ENCODE measurements at regions of chr4 and their contacts with region 1.

Region 1: GRCh38 chr4:13654158-13654797 is 26.8 kb upstream of the BOD1L1 start:
- DNase-seq: peak; percentile 82
- H3K4me3 Mint-ChIP-seq: peak overlapping the region; percentile 68
- H3K27ac Mint-ChIP-seq: no peak overlapping the region
- H3K4me1 Mint-ChIP-seq: peaks cover 12% of the 10 kb centered on the region
- H3K27me3 Mint-ChIP-seq: no peaks in the 10 kb centered on the region
- CTCF ChIP-seq: peak; percentile 45

Region 2: GRCh38 chr4:13701937-13702446 is 47.7 kb after region 1 on chr4:
- CTCF ChIA-PET with region 1: no interaction called
- intact Hi-C with region 1: loop called (anchors 2 kb)
- DNase-seq: peak; percentile 47
- H3K4me3 Mint-ChIP-seq: peak overlapping the region; percentile 30
- H3K27ac Mint-ChIP-seq: peak overlapping the region; percentile 85
- H3K4me1 Mint-ChIP-seq: peaks cover 32% of the 10 kb centered on the region
- H3K27me3 Mint-ChIP-seq: no peaks in the 10 kb centered on the region
- CTCF ChIP-seq: no peak

Region 3: DNA sequence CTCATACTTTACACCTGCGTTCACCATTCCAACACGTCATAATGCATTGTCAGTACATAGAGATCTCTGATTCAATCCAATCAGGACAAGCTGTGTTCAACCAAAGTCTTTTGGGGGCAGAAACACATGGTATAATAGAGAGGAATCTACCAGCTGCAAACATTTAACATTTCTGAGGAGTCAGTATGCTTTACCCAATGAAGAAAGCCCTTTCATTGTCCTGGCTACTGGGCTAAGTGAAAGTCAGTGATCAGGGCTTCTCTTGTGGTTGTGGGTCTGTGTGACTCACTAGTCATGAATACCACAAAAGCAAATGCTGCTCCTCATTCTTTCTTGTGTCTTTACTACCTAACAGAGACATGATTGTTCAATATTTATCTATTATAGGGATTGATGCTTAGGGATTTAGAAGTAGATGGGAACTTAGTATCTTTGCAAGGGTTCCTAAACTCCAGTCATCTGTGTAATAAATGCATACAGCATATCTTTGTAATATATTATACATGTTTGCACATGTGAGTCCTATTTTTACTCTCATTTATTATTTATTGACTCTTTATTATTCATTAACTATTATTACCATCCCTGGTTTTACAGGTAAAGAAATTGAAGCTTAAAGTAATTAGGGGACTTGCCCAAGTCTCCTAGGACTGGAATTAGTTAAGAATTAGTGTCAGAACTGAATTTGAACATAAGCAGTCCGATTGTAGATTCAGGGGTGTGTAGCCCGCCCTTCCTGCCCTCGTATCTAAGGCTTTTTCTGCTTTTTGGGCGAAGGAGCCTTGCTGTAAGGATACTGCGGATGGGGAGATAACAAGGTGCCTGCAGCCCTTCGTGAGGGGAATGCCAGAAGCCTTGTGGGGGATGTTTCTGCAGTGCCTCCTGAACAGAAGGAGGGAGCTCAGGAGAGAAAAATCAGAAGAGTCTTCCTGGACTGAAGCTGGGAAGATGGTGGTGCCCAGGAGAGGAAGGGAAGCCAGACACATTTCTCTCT is 326.3 kb after region 1 on chr4:
- CTCF ChIA-PET with region 1: no interaction called
- intact Hi-C with region 1: loop called (anchors 1 kb)
- DNase-seq: no peak
- H3K4me3 Mint-ChIP-seq: no peak overlapping the region
- H3K27ac Mint-ChIP-seq: peak overlapping the region; percentile 41
- H3K4me1 Mint-ChIP-seq: peaks cover 47% of the 10 kb centered on the region
- H3K27me3 Mint-ChIP-seq: no peaks in the 10 kb centered on the region
- CTCF ChIP-seq: no peak

Region 4: DNA sequence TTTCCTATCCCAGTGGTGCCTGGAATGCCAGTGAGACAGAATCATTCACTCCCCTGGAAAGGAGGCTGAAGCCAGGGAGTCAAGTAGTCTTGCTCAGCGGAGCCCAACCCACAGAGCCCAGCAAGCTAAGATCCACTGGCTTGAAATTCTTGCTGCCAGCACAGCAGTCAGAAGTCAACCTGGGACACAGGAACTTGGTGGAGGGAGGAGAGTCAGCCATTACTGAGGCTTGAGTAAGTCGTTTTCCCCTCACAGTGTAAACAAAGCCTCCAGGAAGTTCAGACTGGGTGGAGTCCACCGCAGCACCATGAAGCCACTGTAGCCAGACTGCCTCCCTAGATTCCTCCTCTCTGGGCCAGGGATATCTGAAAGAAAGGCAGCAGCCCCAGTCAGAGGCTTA is 1064.8 kb after region 1 on chr4:
- CTCF ChIA-PET with region 1: no interaction called
- intact Hi-C with region 1: loop called (anchors 10 kb)
- DNase-seq: peak; percentile 50
- H3K4me3 Mint-ChIP-seq: no peak overlapping the region
- H3K27ac Mint-ChIP-seq: no peak overlapping the region
- H3K4me1 Mint-ChIP-seq: peaks cover 12% of the 10 kb centered on the region
- H3K27me3 Mint-ChIP-seq: no peaks in the 10 kb centered on the region
- CTCF ChIP-seq: no peak

Region 5: GRCh38 chr4:15001869-15002658 is 1347.8 kb after region 1 on chr4 and contains the start of gene CPEB2:
- CTCF ChIA-PET with region 1: interaction called, 5 read pairs
- intact Hi-C with region 1: loop called (anchors 10 kb)
- DNase-seq: peak; percentile 91
- H3K4me3 Mint-ChIP-seq: peak within 1 kb of the TSS; percentile 76
- H3K27ac Mint-ChIP-seq: peak within 1 kb of the TSS; percentile 47
- H3K4me1 Mint-ChIP-seq: no peaks in the 10 kb centered on the region
- H3K27me3 Mint-ChIP-seq: no peaks in the 10 kb centered on the region
- CTCF ChIP-seq: no peak
- total RNA-seq, gene CPEB2: 6.6 and 7.3 TPM in 2 replicates

Measured in Calu3 (cell line).